ENCODE measurements at regions of chr17 and their contacts with region 1.

Region 1: DNA sequence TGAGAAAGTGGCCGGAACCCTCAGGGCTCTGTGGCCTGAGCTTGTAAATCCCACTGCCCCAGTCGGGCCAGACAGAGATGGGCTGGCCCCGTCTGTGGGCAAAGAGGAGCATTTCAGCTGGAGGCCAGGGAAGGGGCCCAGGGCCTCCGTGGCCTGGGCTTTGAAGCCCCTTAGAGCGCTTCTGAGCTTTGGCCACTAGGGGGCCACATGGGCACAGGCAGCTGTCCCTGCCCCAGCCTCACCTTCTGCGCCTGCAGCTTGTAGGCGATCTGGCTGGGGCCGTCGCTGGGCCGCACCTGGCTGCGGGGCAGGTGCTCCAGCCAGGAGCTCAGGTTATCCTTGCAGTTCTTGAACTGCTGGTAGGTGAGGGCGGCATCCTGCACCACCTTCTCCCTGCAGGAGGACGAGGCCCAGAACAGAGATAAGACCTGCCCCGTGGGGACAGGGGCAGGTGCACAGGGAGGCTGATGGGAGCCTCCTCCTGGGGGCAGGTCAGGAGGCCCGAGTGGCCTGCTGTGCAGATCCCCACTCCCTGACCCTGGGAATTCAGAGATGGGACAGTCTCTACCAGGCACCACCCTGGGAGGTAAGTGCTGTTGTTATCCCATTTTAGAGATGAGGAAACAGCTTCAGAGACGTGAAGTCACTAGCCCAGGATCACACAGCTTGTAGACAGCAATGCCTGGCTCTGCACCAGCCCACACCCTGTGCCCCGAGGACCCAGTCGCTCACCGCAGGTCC is 12.8 kb downstream of the EVPL start:
- DNase-seq: peak; percentile 88 to 92
- H3K4me3 ChIP-seq: no peak overlapping the region
- H3K4me3 Mint-ChIP-seq: no peak overlapping the region
- H3K27ac Mint-ChIP-seq: no peak overlapping the region
- H3K4me1 ChIP-seq: peaks cover 11% of the 10 kb centered on the region
- H3K4me1 Mint-ChIP-seq: peaks cover 12% of the 10 kb centered on the region
- H3K27me3 ChIP-seq: no peaks in the 10 kb centered on the region
- H3K27me3 Mint-ChIP-seq: no peaks in the 10 kb centered on the region
- CTCF ChIP-seq: peak; percentile 97

Region 2: DNA sequence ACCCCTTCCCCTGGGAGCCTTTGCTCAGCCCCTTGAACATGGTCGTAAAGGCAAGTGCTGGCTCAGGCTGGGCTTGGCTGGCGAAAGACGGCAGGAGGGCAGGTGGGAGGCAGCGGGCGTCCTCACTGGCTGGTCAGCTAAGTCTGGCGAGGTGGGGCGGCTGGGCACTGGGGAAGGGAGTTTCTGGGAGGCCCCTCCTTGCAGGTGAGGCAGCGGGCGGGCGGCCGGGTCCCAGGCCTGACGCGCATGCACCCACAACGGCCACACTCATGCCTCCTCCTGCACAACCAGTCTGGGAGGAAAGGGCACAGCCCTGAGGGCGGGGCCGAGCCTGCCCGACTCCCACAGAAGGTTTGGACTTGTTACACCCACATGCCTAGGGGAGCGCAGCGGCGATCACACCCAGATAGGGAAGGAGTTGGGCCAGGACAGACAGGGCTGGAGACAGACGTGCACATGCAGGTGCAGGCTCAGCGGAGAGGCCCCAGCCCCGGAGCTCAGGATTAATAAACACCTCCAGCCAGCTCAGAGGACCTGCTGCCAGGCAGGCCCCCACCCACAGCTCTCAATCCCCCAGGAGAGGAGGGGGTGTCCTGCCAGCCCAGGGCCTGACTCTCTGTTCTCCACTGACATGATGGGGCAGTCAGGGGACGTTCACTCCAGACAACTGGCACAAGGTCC is 12.9 kb after region 1 on chr17 and contains the start of gene EVPL:
- CTCF ChIA-PET with region 1: interaction called, 15 read pairs
- POLR2A ChIA-PET with region 1: interaction called, 3 read pairs
- intact Hi-C with region 1: loop called (anchors 2 kb)
- DNase-seq: peak in 1 of 2 experiments; percentile 57
- H3K4me3 ChIP-seq: no peak within 1 kb of the TSS
- H3K4me3 Mint-ChIP-seq: no peak within 1 kb of the TSS
- H3K27ac Mint-ChIP-seq: peak within 1 kb of the TSS; percentile 50
- H3K4me1 ChIP-seq: peaks cover 11% of the 10 kb centered on the region
- H3K4me1 Mint-ChIP-seq: peaks cover 10% of the 10 kb centered on the region
- H3K27me3 ChIP-seq: no peaks in the 10 kb centered on the region
- H3K27me3 Mint-ChIP-seq: no peaks in the 10 kb centered on the region
- CTCF ChIP-seq: no peak
- total RNA-seq, gene EVPL: 0.16 and 0.46 TPM in 2 replicates

Region 3: DNA sequence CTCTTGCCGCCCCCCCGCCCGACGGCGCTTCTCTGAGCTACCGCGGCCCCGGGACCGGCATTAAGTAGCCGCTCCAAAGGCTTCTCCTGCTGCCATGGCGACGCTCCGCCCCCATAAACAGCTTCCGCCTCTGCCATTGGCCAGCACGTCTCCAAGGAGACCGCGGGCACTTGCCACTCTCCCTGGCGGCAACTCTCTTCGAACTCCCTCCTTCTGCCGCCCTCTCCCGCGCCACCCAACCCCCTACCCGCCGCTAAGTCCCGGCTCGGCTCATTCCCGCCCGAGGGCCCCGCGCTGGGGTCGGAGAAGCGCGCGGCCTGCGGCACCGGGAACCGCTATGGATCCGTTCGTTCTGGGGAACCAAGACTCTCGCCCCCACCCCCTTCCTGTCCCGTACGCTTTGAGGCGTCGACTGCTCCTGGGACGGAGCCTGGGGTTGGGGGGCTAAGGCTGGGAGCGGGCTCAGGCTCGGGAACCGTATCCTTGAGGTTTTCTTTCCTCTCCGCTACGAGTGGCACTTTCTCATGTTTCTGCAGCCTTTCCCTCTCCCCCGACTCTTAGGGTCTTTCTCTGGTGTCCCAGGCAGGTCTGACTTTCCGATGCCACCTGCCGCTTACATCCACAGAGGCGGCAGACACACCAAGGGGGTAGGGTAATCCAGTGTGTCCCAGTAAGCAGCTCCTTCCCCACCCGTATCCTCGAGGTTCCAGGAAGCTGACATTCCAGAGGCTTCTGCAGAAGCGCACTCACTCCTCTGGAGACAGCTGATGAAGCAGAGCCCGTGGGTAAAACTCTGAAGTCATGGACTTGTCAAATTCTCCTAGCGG is 127.1 kb after region 1 on chr17 and contains the start of gene FOXJ1:
- CTCF ChIA-PET with region 1: interaction called, 10 read pairs
- POLR2A ChIA-PET with region 1: no interaction called
- intact Hi-C with region 1: no loop called
- DNase-seq: peak; percentile 95 to 97
- H3K4me3 ChIP-seq: peak within 1 kb of the TSS; percentile 70
- H3K4me3 Mint-ChIP-seq: peak within 1 kb of the TSS; percentile 82
- H3K27ac Mint-ChIP-seq: peak within 1 kb of the TSS; percentile 63
- H3K4me1 ChIP-seq: peaks cover 59% of the 10 kb centered on the region
- H3K4me1 Mint-ChIP-seq: peaks cover 40% of the 10 kb centered on the region
- H3K27me3 ChIP-seq: no peaks in the 10 kb centered on the region
- H3K27me3 Mint-ChIP-seq: no peaks in the 10 kb centered on the region
- CTCF ChIP-seq: no peak
- total RNA-seq, gene FOXJ1: 7.0 and 10.7 TPM in 2 replicates

Region 4: DNA sequence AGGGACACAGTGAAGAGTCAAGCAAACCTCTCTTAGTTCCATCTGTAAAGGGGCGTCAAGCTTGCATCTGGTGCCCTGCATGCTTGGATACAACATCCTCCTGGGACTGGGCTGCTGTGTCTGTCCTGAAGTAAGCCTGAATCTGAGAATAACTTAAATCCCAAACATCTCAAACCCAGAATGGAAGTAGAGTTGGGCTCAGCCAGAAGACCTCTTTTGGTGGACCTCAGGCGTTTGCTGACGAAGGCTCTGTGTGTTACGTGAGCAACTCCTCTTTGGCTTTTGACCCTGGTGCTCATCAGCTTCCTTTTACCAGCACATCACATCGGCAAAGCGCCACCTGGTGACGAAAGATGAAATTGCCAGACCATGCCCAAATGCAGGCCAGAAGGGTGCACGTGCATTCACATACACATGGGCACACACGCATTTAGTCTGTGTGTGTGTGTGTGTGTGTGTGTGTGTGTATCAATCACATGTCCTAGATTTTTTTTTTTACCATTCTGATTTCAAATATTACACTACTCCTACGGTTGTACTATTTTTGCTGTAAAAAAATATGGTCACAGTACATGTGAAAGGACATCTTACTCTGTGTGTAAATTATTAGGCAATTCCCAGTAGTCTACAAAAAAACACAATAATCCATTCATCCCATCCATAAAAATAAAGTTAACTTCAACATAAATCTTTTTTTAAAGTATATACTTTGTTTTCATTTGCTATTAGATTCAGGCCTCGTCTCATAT is 167.8 kb after region 1 on chr17:
- CTCF ChIA-PET with region 1: interaction called, 13 read pairs
- POLR2A ChIA-PET with region 1: no interaction called
- intact Hi-C with region 1: loop called (anchors 1 kb)
- DNase-seq: peak; percentile 89 to 93
- H3K4me3 ChIP-seq: no peak overlapping the region
- H3K4me3 Mint-ChIP-seq: no peak overlapping the region
- H3K27ac Mint-ChIP-seq: no peak overlapping the region
- H3K4me1 ChIP-seq: peaks cover 7% of the 10 kb centered on the region
- H3K4me1 Mint-ChIP-seq: peaks cover 6% of the 10 kb centered on the region
- H3K27me3 ChIP-seq: no peaks in the 10 kb centered on the region
- H3K27me3 Mint-ChIP-seq: no peaks in the 10 kb centered on the region
- CTCF ChIP-seq: peak; percentile 88 to 90